Breast epithelium (tissue), 4 donors: ENCODE measurements at regions of chr2 and their contacts with region 1.

Region 1: GRCh38 chr2:177291701-177292100 is 27.2 kb upstream of the NFE2L2 start:
- DNase-seq: no peak
- H3K4me3 ChIP-seq: no peak overlapping the region
- H3K27ac ChIP-seq: no peak overlapping the region
- H3K4me1 ChIP-seq: no peaks in the 10 kb centered on the region
- H3K27me3 ChIP-seq: no peaks in the 10 kb centered on the region
- CTCF ChIP-seq: no peak
- POLR2A ChIP-seq: no peak

Region 2: GRCh38 chr2:176664478-176664877 is 627.2 kb before region 1 on chr2:
- intact Hi-C with region 1: no loop called
- DNase-seq: no peak
- H3K4me3 ChIP-seq: no peak overlapping the region
- H3K27ac ChIP-seq: no peak overlapping the region
- H3K4me1 ChIP-seq: no peaks in the 10 kb centered on the region
- H3K27me3 ChIP-seq: peaks cover 0 to 6% of the 10 kb centered on the region in 2 donors
- CTCF ChIP-seq: no peak
- POLR2A ChIP-seq: no peak

Region 3: DNA sequence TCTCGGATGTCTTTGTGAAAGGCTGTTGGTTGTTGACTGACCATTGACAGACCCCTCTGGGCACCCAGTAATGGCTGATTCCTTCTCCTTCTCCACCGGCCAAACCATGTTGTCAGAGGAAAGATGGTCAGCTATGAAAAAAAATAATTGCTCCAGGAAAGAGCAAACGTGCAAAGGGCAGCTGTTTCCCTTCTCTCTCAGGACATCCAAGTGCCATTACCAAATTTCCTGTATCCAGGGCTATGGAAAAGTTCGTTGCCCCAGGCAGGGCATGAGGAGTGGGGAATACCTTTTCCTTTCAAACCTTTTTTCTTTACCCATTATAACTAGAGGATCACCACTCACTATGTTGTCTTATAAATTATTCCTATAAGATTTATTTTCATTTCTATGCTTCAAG is 400.6 kb before region 1 on chr2:
- intact Hi-C with region 1: no loop called
- DNase-seq: no peak
- H3K4me3 ChIP-seq: no peak overlapping the region
- H3K27ac ChIP-seq: no peak overlapping the region
- H3K4me1 ChIP-seq: no peaks in the 10 kb centered on the region
- H3K27me3 ChIP-seq: no peaks in the 10 kb centered on the region
- CTCF ChIP-seq: no peak
- POLR2A ChIP-seq: no peak

Region 4: GRCh38 chr2:177239932-177240630 is 51.6 kb before region 1 on chr2:
- intact Hi-C with region 1: no loop called
- DNase-seq: no peak
- H3K4me3 ChIP-seq: peak overlapping the region in 1 of 3 donors; percentile 37
- H3K27ac ChIP-seq: peak overlapping the region; percentile 94 to 96
- H3K4me1 ChIP-seq: peaks cover 14 to 32% of the 10 kb centered on the region in 2 donors
- H3K27me3 ChIP-seq: no peaks in the 10 kb centered on the region
- CTCF ChIP-seq: no peak
- POLR2A ChIP-seq: no peak

Region 5: DNA sequence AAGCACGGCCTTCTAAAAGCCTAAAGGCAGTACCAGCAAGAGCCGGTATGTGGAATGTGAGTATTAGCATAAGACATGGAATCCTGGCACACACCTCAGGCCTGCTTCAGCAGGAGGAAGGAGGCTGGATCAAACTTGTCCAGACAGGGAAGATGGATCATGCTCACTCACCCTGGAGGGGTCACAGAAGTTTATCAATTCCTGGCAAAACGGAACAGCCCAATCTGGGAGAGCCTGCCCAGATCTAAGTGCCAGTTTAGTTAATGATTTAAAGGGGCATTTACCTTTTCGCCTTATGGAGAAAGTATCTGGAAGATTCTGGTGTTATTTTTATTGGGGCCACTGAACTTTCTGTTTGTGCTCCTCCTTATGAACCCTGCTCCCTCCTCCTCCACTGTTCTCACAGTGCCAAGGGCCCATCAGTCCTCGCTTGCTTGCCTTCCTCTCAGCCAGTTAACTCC is 31.1 kb after region 1 on chr2:
- intact Hi-C with region 1: loop called (anchors 1 kb)
- DNase-seq: peak in 1 of 2 donors; percentile 79
- H3K4me3 ChIP-seq: no peak overlapping the region
- H3K27ac ChIP-seq: peak overlapping the region; percentile 51 to 53
- H3K4me1 ChIP-seq: no peaks in the 10 kb centered on the region
- H3K27me3 ChIP-seq: no peaks in the 10 kb centered on the region
- CTCF ChIP-seq: no peak
- POLR2A ChIP-seq: no peak

Region 6: GRCh38 chr2:177568390-177568789 is 276.7 kb after region 1 on chr2:
- intact Hi-C with region 1: no loop called
- DNase-seq: no peak
- H3K4me3 ChIP-seq: no peak overlapping the region
- H3K27ac ChIP-seq: no peak overlapping the region
- H3K4me1 ChIP-seq: no peaks in the 10 kb centered on the region
- H3K27me3 ChIP-seq: no peaks in the 10 kb centered on the region
- CTCF ChIP-seq: no peak
- POLR2A ChIP-seq: no peak